ENCODE measurements at regions of chrX and their contacts with region 1.

Region 1: DNA sequence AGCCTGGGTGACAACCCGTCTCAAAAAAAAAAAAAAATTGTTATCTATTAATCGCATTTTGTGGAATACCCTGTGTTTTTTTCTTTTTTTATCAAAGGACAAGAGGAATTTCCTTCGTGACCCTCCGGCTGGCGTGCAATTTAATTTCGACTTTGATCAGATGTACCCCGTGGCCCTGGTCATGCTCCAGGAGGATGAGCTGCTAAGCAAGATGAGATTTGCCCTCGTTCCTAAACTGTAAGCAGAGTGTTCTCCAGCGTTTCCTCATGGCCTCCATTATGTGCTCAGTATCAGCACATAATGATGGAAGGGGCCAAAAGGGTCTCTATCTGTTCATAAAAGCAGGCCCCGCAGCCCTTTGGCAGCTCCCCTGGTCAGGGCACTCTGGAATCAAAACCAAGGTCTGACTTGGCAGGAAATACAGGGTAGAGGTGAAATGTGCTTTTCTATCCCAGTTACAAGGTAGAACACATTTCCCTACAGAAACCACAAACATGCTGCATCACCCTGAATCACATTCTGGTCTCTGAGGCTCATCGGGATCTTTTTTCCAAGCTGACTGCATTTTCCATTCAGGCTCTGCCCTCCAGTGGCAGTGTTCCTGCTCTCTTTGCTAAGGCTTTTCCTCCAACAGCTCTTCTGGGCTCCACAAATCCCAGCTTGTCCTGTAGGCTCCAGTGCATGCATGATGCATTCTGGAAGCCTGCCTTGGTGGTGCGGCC is 24.4 kb downstream of the SYAP1 start:
- DNase-seq: peak; percentile 90
- H3K4me3 ChIP-seq: no peak overlapping the region
- H3K27ac ChIP-seq: peak overlapping the region; percentile 41
- H3K4me1 ChIP-seq: peaks cover 9% of the 10 kb centered on the region
- H3K27me3 ChIP-seq: no peaks in the 10 kb centered on the region
- CTCF ChIP-seq: peak; percentile 51 to 64

Region 2: DNA sequence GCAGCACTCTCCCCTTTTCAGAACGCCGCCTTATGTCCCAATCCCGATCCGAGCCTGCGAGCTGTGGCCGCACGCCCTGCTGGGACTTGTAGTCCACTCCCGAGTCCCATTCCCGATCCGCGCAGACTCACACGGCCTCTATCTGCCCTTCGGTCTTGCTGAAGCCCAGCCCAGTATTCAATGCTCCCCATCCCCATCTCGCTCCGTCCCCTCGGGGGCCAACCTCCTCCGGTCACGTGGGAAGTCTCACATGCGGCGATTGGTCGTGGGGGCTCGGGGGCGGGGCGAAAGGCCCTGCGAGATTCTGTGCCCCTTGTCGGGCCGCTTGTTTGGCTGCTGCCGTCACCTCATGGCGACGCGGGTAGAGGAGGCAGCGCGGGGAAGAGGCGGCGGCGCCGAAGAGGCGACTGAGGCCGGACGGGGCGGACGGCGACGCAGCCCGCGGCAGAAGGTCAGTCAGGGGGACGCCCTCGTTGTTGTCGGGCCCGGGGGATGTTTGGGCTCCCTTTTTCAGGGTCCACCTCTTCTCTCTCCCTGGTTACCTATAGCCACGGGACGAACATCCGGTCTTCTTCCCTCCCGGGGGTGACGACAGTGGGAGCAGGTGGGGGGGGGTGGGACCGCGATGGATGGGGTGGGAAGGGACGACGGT is 42.5 kb after region 1 on chrX and contains the start of gene TXLNG:
- CTCF ChIA-PET with region 1: no interaction called
- dilution Hi-C with region 1: no loop called
- in situ Hi-C with region 1: no loop called
- intact Hi-C with region 1: loop called (anchors 1 kb)
- DNase-seq: peak; percentile 100
- H3K4me3 ChIP-seq: peak within 1 kb of the TSS; percentile 77 to 93 (median 78)
- H3K27ac ChIP-seq: peak within 1 kb of the TSS; percentile 83
- H3K4me1 ChIP-seq: peaks cover 7% of the 10 kb centered on the region
- H3K27me3 ChIP-seq: no peaks in the 10 kb centered on the region
- CTCF ChIP-seq: no peak
- total RNA-seq, gene TXLNG: 13.2 to 28.3 TPM

Measured in mammary epithelial cell (primary cell).